ENCODE measurements at regions of chr16 and their contacts with region 1.

Region 1: DNA sequence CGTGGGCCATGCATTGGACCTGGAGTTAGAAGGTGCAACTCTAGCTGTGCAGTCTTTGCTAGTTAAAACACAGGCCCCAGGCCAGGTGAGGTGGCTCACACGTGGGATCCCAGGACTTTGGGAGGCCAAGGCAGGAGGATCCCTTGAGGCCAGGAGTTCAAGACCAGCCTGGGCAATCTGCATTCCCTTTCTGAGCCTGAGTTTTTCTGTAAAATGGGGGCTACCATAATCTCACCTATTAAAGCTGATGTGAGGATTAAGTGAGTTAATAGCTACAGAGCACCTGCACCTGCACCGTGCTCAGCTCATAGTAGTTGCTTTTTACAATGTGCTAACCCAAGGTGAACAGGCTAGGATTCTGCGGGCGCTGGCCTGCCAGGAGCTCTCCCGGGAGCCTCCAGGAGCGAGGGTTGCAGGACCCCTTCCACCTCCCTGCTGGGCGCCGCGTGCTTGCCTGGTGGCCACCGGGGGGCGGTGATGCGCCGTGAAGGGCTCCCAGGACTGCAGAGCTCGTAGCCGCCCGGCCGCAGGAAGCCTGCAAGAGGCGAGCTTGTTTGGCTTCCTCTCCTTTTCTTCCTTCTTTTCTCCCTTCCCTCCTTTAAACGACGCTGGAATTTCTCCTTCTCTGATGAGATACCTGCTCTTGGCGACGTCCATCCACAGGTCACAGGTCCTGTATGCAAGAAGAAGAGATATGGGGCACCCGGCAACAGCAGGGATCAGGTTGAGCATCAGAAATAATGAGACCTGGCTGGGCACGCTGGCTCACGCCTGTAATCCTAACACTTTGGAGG is 51.3 kb downstream of the ZFP90 start:
- DNase-seq: peak; percentile 93
- H3K4me3 Mint-ChIP-seq: peak overlapping the region; percentile 13
- H3K27ac Mint-ChIP-seq: no peak overlapping the region
- H3K4me1 Mint-ChIP-seq: no peaks in the 10 kb centered on the region
- H3K27me3 Mint-ChIP-seq: no peaks in the 10 kb centered on the region
- CTCF ChIP-seq: peak; percentile 90

Region 2: DNA sequence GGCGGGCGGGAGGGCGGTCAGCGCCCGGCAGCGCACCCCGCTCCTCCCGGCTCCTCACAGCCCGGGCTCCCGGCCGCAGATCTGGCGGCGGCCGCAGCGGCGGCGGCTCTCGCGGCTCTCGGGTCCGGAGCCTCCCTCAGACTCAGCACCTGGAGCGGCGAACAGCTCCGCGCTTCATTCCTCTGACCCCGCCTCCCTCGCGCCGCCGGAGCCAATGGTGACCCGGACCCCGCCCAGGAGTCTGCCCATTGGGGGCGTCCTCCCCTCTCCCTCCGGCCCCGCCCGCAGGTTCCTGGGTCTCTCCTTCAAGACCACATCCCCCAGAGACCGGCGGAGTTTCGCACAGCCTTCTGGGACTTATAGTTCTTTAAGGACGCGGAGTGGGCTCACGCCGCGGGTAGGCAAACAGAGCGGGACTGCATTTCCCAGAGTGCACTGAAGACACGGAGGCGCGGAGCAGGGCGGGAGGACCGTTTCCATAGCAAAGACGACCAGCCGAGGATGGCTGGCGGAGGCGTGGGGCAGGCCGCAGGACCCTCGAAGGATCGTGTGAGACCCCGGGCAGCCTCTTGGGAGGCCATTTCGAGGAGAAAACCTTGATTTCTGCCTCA is 141.9 kb before region 1 on chr16 and contains the start of gene SMPD3:
- CTCF ChIA-PET with region 1: no interaction called
- intact Hi-C with region 1: no loop called
- DNase-seq: peak; percentile 100
- H3K4me3 Mint-ChIP-seq: peak within 1 kb of the TSS; percentile 71
- H3K27ac Mint-ChIP-seq: peak within 1 kb of the TSS; percentile 33
- H3K4me1 Mint-ChIP-seq: peaks cover 16% of the 10 kb centered on the region
- H3K27me3 Mint-ChIP-seq: peaks cover 52% of the 10 kb centered on the region
- CTCF ChIP-seq: no peak
- total RNA-seq, gene SMPD3: 0.42 and 1.2 TPM in 2 replicates

Region 3: GRCh38 chr16:68636064-68636560 is 45.7 kb after region 1 on chr16:
- CTCF ChIA-PET with region 1: interaction called, 10 read pairs
- intact Hi-C with region 1: no loop called
- DNase-seq: peak; percentile 43
- H3K4me3 Mint-ChIP-seq: peak overlapping the region; percentile 13
- H3K27ac Mint-ChIP-seq: peak overlapping the region; percentile 3
- H3K4me1 Mint-ChIP-seq: peaks cover 24% of the 10 kb centered on the region
- H3K27me3 Mint-ChIP-seq: no peaks in the 10 kb centered on the region
- CTCF ChIP-seq: no peak

Region 4: DNA sequence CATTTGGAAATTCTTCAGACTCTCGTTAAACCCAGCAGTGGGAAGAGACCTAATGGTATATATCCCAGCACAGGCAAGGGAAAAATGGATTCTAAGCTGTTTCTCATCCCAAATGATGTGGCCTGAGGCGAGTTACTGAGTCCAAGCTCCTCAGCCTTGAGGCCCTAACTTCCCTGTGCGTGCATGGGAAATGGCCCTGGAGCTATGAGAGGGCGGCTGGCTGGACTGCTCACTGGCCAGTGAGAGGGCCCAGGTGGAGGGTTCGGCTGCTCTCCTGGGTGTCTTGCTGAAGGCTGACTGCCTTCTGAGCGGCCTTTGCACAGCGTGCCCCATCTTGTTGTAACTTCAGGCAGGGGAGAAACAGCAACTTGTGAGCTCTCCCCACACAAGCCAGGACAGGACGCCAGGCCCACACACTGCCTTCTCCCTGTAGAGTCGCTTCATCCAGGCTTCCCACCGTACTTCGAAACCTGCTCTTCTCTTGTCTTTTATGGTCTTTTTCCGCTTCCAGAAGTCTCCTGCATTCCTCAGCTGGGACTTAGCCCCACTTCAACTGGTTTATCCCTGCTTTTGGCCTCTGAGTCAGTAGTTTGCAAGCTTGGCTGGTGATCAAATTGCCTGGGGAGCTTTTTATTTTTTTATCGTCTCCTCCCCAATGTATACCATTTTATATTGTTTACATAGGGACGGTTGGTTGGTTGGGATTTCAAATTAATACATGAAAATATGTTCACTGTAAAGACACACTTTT is 68.0 kb after region 1 on chr16:
- CTCF ChIA-PET with region 1: interaction called, 12 read pairs
- intact Hi-C with region 1: loop called (anchors 10 kb)
- DNase-seq: peak; percentile 46
- H3K4me3 Mint-ChIP-seq: peak overlapping the region; percentile 39
- H3K27ac Mint-ChIP-seq: peak overlapping the region; percentile 66
- H3K4me1 Mint-ChIP-seq: peaks cover 9% of the 10 kb centered on the region
- H3K27me3 Mint-ChIP-seq: no peaks in the 10 kb centered on the region
- CTCF ChIP-seq: no peak

Region 5: GRCh38 chr16:68668266-68668665 is 77.9 kb after region 1 on chr16:
- CTCF ChIA-PET with region 1: interaction called, 5 read pairs
- intact Hi-C with region 1: loop called (anchors 10 kb)
- DNase-seq: no peak
- H3K4me3 Mint-ChIP-seq: no peak overlapping the region
- H3K27ac Mint-ChIP-seq: no peak overlapping the region
- H3K4me1 Mint-ChIP-seq: no peaks in the 10 kb centered on the region
- H3K27me3 Mint-ChIP-seq: no peaks in the 10 kb centered on the region
- CTCF ChIP-seq: no peak

Region 6: DNA sequence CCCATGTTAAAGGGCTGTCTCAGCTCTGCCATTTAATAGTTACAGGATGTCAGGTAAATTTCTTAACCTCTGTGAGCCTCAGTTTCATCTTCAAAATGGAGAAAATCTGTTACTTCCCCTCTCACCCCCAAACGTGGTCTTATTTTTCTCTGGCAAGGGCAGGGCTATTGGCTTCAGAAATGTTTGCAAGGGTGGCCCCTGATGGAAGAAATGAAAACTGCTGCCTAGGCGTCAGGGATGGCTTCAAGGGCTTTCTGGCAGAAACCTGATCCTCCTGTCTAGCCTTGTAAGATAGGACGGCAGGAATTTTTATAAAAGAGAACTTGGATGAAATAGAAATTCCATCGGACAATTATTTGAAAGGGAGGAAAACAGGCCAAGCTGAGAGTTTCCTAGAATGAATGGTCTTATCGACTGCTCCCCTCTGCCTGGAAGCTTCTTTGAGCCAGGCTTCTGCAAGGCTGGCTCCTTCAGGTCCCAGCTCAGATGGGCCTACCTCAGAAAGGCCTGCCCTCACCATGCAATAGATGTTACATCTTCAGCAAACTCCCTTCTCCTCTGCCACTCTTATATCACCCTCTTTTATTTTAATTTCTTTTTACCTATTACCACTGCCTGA is 210.0 kb after region 1 on chr16:
- CTCF ChIA-PET with region 1: interaction called, 7 read pairs
- intact Hi-C with region 1: loop called (anchors 5 kb)
- DNase-seq: peak; percentile 87
- H3K4me3 Mint-ChIP-seq: no peak overlapping the region
- H3K27ac Mint-ChIP-seq: peak overlapping the region; percentile 19
- H3K4me1 Mint-ChIP-seq: peaks cover 35% of the 10 kb centered on the region
- H3K27me3 Mint-ChIP-seq: no peaks in the 10 kb centered on the region
- CTCF ChIP-seq: peak; percentile 83